Mammary epithelial cell (primary cell): ENCODE measurements at regions of chr5 and their contacts with region 1.

Region 1: DNA sequence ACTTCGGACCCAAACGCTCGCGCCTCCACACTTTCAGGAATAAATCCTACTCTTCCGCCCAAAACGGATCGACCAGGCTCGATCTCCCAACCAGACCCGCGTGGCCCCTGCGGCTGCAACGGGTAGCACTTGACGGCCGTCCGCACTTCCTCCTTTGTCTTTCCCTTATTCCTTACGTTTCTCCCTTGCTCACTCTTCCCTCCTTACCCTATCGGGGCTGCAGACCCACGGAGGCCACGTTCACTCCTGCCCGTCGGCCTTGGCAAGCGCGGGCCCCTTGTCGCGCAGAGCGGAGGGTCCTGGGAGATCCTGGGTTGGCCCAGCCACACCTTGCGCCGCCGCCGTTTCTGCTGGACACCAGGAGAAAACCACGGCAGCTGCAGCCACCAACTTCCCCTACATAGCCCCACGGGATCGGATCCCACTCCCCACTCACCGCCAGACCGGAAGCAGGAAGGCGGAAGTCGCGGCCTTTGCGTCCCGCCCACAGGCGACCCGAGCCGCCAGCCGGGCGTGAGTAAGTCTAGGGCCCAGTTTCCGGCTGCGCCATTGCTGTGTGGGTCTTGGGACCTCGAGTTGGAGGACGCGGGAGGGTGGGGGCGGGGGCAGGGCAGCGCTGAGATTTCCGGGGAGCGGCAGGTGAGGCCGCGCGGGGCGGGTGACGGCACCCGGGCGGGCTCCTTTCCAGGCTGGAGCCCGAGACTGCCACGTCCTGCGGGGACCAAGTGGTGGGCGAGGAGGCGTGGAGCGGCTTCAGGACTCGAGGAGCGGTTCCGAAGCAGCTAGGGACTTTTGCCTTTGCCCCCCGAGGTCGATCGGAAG is at the start of gene SMIM15:
- DNase-seq: peak; percentile 86
- H3K4me3 ChIP-seq: peak within 1 kb of the TSS; percentile 95 to 97 (median 96)
- H3K27ac ChIP-seq: peak within 1 kb of the TSS; percentile 94
- H3K4me1 ChIP-seq: peaks cover 12% of the 10 kb centered on the region
- H3K27me3 ChIP-seq: no peaks in the 10 kb centered on the region
- CTCF ChIP-seq: peak in 1 of 2 donors; percentile 0
- total RNA-seq, gene SMIM15: 36.7 to 75.0 TPM

Region 2: GRCh38 chr5:61055434-61056006 is 106.7 kb before region 1 on chr5:
- CTCF ChIA-PET with region 1: no interaction called
- dilution Hi-C with region 1: no loop called
- in situ Hi-C with region 1: no loop called
- intact Hi-C with region 1: loop called (anchors 5 kb)
- DNase-seq: peak; percentile 40
- H3K4me3 ChIP-seq: no peak overlapping the region
- H3K27ac ChIP-seq: no peak overlapping the region
- H3K4me1 ChIP-seq: peaks cover 34% of the 10 kb centered on the region
- H3K27me3 ChIP-seq: no peaks in the 10 kb centered on the region
- CTCF ChIP-seq: peak; percentile 73 to 85

Region 3: DNA sequence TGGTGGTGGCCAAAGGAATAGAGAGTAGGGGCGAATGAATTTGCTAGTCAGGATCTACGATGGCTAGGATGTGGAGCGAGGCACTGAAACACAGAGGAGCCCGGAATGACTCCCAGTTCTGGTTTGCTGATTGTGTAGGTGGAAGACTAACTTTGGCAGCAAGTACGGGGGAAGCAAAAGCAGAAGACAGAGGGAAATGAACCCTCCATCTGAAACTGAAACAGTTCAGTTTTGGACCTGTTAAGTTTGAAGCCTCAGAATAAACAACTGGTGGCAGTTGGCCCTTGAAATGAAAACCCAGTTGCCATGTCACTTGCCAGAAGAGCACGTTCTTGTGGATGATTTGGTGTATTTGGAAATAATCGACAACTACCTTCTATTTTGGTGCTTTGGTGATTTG is 15.5 kb after region 1 on chr5:
- CTCF ChIA-PET with region 1: no interaction called
- dilution Hi-C with region 1: no loop called
- in situ Hi-C with region 1: no loop called
- intact Hi-C with region 1: no loop called
- DNase-seq: no peak
- H3K4me3 ChIP-seq: no peak overlapping the region
- H3K27ac ChIP-seq: no peak overlapping the region
- H3K4me1 ChIP-seq: no peaks in the 10 kb centered on the region
- H3K27me3 ChIP-seq: no peaks in the 10 kb centered on the region
- CTCF ChIP-seq: no peak

Region 4: GRCh38 chr5:61319388-61320146 is 157.3 kb after region 1 on chr5:
- CTCF ChIA-PET with region 1: no interaction called
- dilution Hi-C with region 1: no loop called
- in situ Hi-C with region 1: loop called in 1 of 2 experiments (anchors 10 kb)
- intact Hi-C with region 1: no loop called
- DNase-seq: no peak
- H3K4me3 ChIP-seq: no peak overlapping the region
- H3K27ac ChIP-seq: no peak overlapping the region
- H3K4me1 ChIP-seq: peaks cover 3% of the 10 kb centered on the region
- H3K27me3 ChIP-seq: no peaks in the 10 kb centered on the region
- CTCF ChIP-seq: no peak

Region 5: GRCh38 chr5:61658592-61659008 is 496.4 kb after region 1 on chr5:
- CTCF ChIA-PET with region 1: interaction called, 4 read pairs
- dilution Hi-C with region 1: no loop called
- in situ Hi-C with region 1: loop called in 1 of 2 experiments (anchors 25 kb)
- intact Hi-C with region 1: loop called (anchors 1 kb)
- DNase-seq: peak; percentile 55
- H3K4me3 ChIP-seq: no peak overlapping the region
- H3K27ac ChIP-seq: no peak overlapping the region
- H3K4me1 ChIP-seq: no peaks in the 10 kb centered on the region
- H3K27me3 ChIP-seq: no peaks in the 10 kb centered on the region
- CTCF ChIP-seq: peak; percentile 92 to 95

Region 6: DNA sequence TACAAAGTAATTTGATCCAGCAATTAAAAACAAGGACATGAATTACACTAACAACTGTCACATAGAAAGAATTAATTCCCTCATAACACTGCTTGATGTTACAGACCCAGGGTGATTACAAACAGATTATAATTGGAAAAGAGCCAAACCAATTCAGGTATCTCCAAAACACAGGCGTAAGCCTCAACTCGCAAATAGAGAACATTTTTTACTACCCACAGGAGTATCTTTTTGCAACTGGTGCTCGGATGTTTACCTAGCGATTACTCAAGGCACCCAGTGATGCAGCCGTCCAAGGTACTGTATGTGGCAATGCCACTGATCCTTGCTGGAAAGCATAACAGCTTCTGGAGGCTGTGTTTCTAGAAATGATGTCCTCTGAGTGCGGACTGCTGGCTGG is 757.7 kb after region 1 on chr5:
- CTCF ChIA-PET with region 1: no interaction called
- dilution Hi-C with region 1: no loop called
- in situ Hi-C with region 1: loop called in 1 of 2 experiments (anchors 25 kb)
- intact Hi-C with region 1: loop called (anchors 5 kb)
- DNase-seq: peak; percentile 94
- H3K4me3 ChIP-seq: no peak overlapping the region
- H3K27ac ChIP-seq: peak overlapping the region; percentile 100
- H3K4me1 ChIP-seq: peaks cover 61% of the 10 kb centered on the region
- H3K27me3 ChIP-seq: no peaks in the 10 kb centered on the region
- CTCF ChIP-seq: no peak